GM10248 (cell line): ENCODE measurements at regions of chr6 and their contacts with region 1.

Region 1: GRCh38 chr6:13478525-13478966 is 8.9 kb downstream of the GFOD1 start:
- DNase-seq: peak; percentile 36
- CTCF ChIP-seq: no peak

Region 2: GRCh38 chr6:13466304-13467215 is 12.0 kb before region 1 on chr6:
- CTCF ChIA-PET with region 1: interaction called, 10 read pairs
- POLR2A ChIA-PET with region 1: no interaction called
- DNase-seq: peak; percentile 54
- CTCF ChIP-seq: no peak